ENCODE measurements at regions of chr6 and their contacts with region 1.

Region 1: GRCh38 chr6:116287689-116288282 is 8.1 kb upstream of the TSPYL1 start:
- DNase-seq: peak; percentile 67
- ATAC-seq: peak; percentile 76
- H3K4me3 ChIP-seq: no peak overlapping the region
- H3K4me3 Mint-ChIP-seq: no peak overlapping the region
- H3K27ac ChIP-seq: no peak overlapping the region
- H3K27ac Mint-ChIP-seq: no peak overlapping the region
- H3K4me1 ChIP-seq: no peaks in the 10 kb centered on the region
- H3K4me1 Mint-ChIP-seq: peaks cover 5% of the 10 kb centered on the region
- H3K27me3 ChIP-seq: no peaks in the 10 kb centered on the region
- H3K27me3 Mint-ChIP-seq: no peaks in the 10 kb centered on the region
- CTCF ChIP-seq: peak; percentile 99

Region 2: GRCh38 chr6:115629415-115629814 is 658.4 kb before region 1 on chr6:
- CTCF ChIA-PET with region 1: no interaction called
- POLR2A ChIA-PET with region 1: no interaction called
- intact Hi-C with region 1: no loop called
- DNase-seq: no peak
- ATAC-seq: no peak
- H3K4me3 ChIP-seq: no peak overlapping the region
- H3K4me3 Mint-ChIP-seq: no peak overlapping the region
- H3K27ac ChIP-seq: no peak overlapping the region
- H3K27ac Mint-ChIP-seq: no peak overlapping the region
- H3K4me1 ChIP-seq: no peaks in the 10 kb centered on the region
- H3K4me1 Mint-ChIP-seq: no peaks in the 10 kb centered on the region
- H3K27me3 ChIP-seq: no peaks in the 10 kb centered on the region
- H3K27me3 Mint-ChIP-seq: no peaks in the 10 kb centered on the region
- CTCF ChIP-seq: no peak

Region 3: DNA sequence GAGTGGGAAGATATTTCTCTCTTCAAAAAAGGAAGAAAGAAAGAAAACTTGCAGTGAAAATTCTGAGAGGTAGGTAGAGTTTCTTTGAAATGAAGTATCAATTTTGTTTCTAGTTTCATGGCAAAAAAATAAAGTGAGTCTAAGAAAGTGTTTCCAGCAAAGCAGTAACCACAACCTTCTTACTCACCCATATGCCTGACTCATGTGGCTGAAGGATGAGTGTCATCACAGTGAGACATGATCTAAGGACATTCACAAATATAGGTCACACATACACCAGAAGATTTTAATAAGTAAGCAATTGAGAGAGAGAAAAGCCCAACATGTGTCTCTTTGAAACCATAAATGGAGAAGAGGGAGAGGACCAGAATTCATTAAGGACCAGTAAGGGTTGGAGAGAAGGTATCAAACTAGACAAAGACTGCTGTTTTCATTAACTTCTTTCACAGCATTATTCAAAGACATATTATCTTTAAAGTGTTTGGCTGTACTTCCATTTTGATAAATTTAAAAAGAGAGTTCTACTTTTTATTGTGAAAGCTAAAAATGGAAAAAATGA is 396.6 kb before region 1 on chr6:
- CTCF ChIA-PET with region 1: no interaction called
- POLR2A ChIA-PET with region 1: no interaction called
- intact Hi-C with region 1: no loop called
- DNase-seq: no peak
- ATAC-seq: no peak
- H3K4me3 ChIP-seq: no peak overlapping the region
- H3K4me3 Mint-ChIP-seq: no peak overlapping the region
- H3K27ac ChIP-seq: no peak overlapping the region
- H3K27ac Mint-ChIP-seq: no peak overlapping the region
- H3K4me1 ChIP-seq: no peaks in the 10 kb centered on the region
- H3K4me1 Mint-ChIP-seq: no peaks in the 10 kb centered on the region
- H3K27me3 ChIP-seq: no peaks in the 10 kb centered on the region
- H3K27me3 Mint-ChIP-seq: peaks cover 5% of the 10 kb centered on the region
- CTCF ChIP-seq: no peak

Region 4: GRCh38 chr6:116268589-116269293 is 19.0 kb before region 1 on chr6:
- CTCF ChIA-PET with region 1: interaction called, 37 read pairs
- POLR2A ChIA-PET with region 1: no interaction called
- intact Hi-C with region 1: no loop called
- DNase-seq: peak; percentile 71
- ATAC-seq: peak; percentile 77
- H3K4me3 ChIP-seq: no peak overlapping the region
- H3K4me3 Mint-ChIP-seq: no peak overlapping the region
- H3K27ac ChIP-seq: no peak overlapping the region
- H3K27ac Mint-ChIP-seq: no peak overlapping the region
- H3K4me1 ChIP-seq: no peaks in the 10 kb centered on the region
- H3K4me1 Mint-ChIP-seq: peaks cover 22% of the 10 kb centered on the region
- H3K27me3 ChIP-seq: no peaks in the 10 kb centered on the region
- H3K27me3 Mint-ChIP-seq: no peaks in the 10 kb centered on the region
- CTCF ChIP-seq: peak; percentile 75

Region 5: GRCh38 chr6:116392132-116393013 is 104.6 kb after region 1 on chr6:
- CTCF ChIA-PET with region 1: interaction called, 12 read pairs
- POLR2A ChIA-PET with region 1: no interaction called
- intact Hi-C with region 1: no loop called
- DNase-seq: peak; percentile 68
- ATAC-seq: peak; percentile 40
- H3K4me3 ChIP-seq: peak overlapping the region in 1 of 5 experiments; percentile 19
- H3K4me3 Mint-ChIP-seq: peak overlapping the region; percentile 66
- H3K27ac ChIP-seq: peak overlapping the region; percentile 39 to 93
- H3K27ac Mint-ChIP-seq: peak overlapping the region; percentile 81
- H3K4me1 ChIP-seq: peaks cover 71 to 77% of the 10 kb centered on the region in 2 donors
- H3K4me1 Mint-ChIP-seq: peaks cover 67% of the 10 kb centered on the region
- H3K27me3 ChIP-seq: no peaks in the 10 kb centered on the region
- H3K27me3 Mint-ChIP-seq: no peaks in the 10 kb centered on the region
- CTCF ChIP-seq: no peak

Region 6: GRCh38 chr6:116456927-116457326 is 169.1 kb after region 1 on chr6:
- CTCF ChIA-PET with region 1: interaction called, 11 read pairs
- POLR2A ChIA-PET with region 1: no interaction called
- intact Hi-C with region 1: no loop called
- DNase-seq: no peak
- ATAC-seq: no peak
- H3K4me3 ChIP-seq: no peak overlapping the region
- H3K4me3 Mint-ChIP-seq: no peak overlapping the region
- H3K27ac ChIP-seq: no peak overlapping the region
- H3K27ac Mint-ChIP-seq: no peak overlapping the region
- H3K4me1 ChIP-seq: peaks cover 8 to 10% of the 10 kb centered on the region in 2 donors
- H3K4me1 Mint-ChIP-seq: peaks cover 17% of the 10 kb centered on the region
- H3K27me3 ChIP-seq: no peaks in the 10 kb centered on the region
- H3K27me3 Mint-ChIP-seq: no peaks in the 10 kb centered on the region
- CTCF ChIP-seq: no peak

Region 7: GRCh38 chr6:116542426-116542825 is 254.6 kb after region 1 on chr6:
- CTCF ChIA-PET with region 1: interaction called, 20 read pairs
- POLR2A ChIA-PET with region 1: no interaction called
- intact Hi-C with region 1: no loop called
- DNase-seq: no peak
- ATAC-seq: no peak
- H3K4me3 ChIP-seq: no peak overlapping the region
- H3K4me3 Mint-ChIP-seq: no peak overlapping the region
- H3K27ac ChIP-seq: no peak overlapping the region
- H3K27ac Mint-ChIP-seq: no peak overlapping the region
- H3K4me1 ChIP-seq: no peaks in the 10 kb centered on the region
- H3K4me1 Mint-ChIP-seq: no peaks in the 10 kb centered on the region
- H3K27me3 ChIP-seq: peaks cover 0 to 3% (median 0%) of the 10 kb centered on the region in 4 experiments
- H3K27me3 Mint-ChIP-seq: peaks cover 31% of the 10 kb centered on the region
- CTCF ChIP-seq: no peak

Region 8: DNA sequence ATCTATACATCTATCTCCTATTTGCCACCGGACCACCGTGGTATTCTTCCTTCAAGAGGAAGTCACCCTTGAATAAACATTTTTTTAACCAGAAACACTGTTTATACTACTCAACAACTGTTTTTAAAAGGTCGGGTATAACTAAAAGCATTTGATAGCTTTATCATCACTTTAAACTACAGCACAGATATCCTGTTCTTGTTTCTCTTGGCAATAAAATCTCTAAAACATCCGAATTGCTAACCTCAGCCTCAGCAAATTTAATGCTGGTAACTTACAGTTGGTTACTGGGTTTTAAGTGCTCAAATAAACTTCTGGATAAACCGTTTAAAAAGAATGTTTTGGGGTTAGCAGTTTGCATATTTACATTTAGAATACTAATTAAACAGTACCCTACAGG is 360.4 kb after region 1 on chr6:
- CTCF ChIA-PET with region 1: interaction called, 4 read pairs
- POLR2A ChIA-PET with region 1: no interaction called
- intact Hi-C with region 1: loop called (anchors 5 kb)
- DNase-seq: no peak
- ATAC-seq: no peak
- H3K4me3 ChIP-seq: no peak overlapping the region
- H3K4me3 Mint-ChIP-seq: no peak overlapping the region
- H3K27ac ChIP-seq: no peak overlapping the region
- H3K27ac Mint-ChIP-seq: no peak overlapping the region
- H3K4me1 ChIP-seq: no peaks in the 10 kb centered on the region
- H3K4me1 Mint-ChIP-seq: no peaks in the 10 kb centered on the region
- H3K27me3 ChIP-seq: no peaks in the 10 kb centered on the region
- H3K27me3 Mint-ChIP-seq: no peaks in the 10 kb centered on the region
- CTCF ChIP-seq: no peak

Measured in B cell (primary cell).